Right ventricle myocardium inferior (tissue), 1 donor: ENCODE measurements at regions of chr10 and their contacts with region 1.

Region 1: GRCh38 chr10:30783939-30784500 is 154.5 kb upstream of the LYZL2 start:
- DNase-seq: peak; percentile 90
- ATAC-seq: peak; percentile 83

Region 2: GRCh38 chr10:30233186-30233959 is 550.6 kb before region 1 on chr10:
- intact Hi-C with region 1: no loop called
- DNase-seq: no peak
- ATAC-seq: no peak

Region 3: DNA sequence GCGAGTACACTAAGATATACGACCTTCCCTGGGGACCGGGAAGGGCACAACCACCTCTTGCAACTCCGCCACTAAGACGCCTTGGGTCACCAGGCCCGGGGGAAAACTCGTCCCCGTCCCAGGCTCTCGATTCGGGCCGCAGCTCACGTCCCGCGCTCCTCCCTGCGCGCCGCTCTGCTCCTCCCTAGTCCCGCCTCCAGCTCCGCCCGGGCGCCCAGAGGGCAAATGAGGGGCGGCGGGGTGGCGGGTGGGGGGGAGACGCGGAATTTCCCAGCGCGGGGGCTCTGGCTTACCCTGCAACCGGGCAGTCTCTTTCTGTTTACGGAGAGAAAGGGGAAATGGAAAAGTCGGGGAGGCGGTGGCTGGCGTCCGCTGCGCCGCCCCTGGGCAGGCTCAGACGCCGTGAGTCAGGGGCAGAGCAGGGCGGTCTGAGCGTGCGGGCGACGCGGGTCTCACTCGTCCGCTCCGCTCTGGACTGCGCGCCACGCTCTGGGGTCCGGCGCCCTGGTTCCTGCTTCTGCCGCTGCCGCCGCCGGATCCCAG is 350.2 kb before region 1 on chr10 and contains the start of gene MAP3K8:
- intact Hi-C with region 1: no loop called
- DNase-seq: peak; percentile 96
- ATAC-seq: peak; percentile 92
- total RNA-seq, gene MAP3K8: 6.7 TPM

Region 4: GRCh38 chr10:30857803-30858202 is 73.8 kb after region 1 on chr10:
- intact Hi-C with region 1: loop called (anchors 2 kb)
- DNase-seq: peak; percentile 84
- ATAC-seq: peak; percentile 96

Region 5: DNA sequence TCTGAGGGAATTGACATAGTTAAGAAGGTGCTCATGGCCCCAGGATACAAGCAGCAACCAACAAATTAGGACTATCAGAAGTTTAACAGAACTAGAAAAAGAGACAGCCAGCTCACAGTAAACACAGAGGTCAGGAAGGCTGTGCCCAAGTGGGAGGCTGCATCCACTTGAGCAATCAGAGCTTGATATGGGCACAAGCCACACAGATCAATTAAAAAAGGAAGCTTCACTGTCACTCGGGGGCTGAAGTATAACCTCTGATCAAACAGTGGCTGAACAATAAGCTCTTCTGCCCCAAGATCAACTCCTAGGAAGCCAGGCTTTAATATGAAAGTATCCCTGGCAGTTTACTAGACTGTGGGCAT is 207.6 kb after region 1 on chr10:
- intact Hi-C with region 1: loop called (anchors 5 kb)
- DNase-seq: no peak
- ATAC-seq: peak; percentile 35

Region 6: GRCh38 chr10:31133628-31134302 is 349.7 kb after region 1 on chr10:
- intact Hi-C with region 1: loop called (anchors 10 kb)
- DNase-seq: peak; percentile 93
- ATAC-seq: peak; percentile 90

Region 7: DNA sequence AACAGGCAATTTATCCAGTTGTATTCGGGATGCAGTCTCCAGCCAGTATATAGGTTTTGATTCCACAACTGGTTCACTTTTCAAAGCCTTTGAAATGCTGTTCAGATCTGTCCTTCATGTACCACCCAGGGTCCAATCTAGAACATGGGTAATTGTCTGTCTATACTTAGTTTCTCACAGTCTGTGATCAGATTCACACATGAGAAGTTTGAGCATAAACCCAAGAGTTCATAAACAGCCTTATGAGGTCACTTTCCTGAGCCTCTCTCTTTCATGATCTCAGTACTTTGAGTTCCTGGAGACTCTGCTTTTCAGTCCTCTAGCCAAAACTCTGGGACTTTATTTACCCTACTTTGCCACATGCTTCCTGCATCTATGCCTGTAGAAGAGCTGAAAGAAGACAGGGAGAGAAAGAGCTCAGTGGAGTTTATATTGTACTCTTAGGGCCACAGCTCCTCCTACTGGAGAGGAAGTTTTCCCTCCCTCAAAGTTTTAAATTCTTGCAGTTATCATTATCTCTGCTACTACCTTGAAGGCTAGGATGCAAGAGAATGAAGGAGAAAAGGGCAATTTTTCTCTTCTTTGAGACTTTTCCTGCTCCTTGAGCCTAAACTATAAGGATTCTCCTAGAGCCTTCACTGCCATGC is 707.0 kb after region 1 on chr10:
- intact Hi-C with region 1: loop called (anchors 2 kb)
- DNase-seq: no peak
- ATAC-seq: no peak

Region 8: DNA sequence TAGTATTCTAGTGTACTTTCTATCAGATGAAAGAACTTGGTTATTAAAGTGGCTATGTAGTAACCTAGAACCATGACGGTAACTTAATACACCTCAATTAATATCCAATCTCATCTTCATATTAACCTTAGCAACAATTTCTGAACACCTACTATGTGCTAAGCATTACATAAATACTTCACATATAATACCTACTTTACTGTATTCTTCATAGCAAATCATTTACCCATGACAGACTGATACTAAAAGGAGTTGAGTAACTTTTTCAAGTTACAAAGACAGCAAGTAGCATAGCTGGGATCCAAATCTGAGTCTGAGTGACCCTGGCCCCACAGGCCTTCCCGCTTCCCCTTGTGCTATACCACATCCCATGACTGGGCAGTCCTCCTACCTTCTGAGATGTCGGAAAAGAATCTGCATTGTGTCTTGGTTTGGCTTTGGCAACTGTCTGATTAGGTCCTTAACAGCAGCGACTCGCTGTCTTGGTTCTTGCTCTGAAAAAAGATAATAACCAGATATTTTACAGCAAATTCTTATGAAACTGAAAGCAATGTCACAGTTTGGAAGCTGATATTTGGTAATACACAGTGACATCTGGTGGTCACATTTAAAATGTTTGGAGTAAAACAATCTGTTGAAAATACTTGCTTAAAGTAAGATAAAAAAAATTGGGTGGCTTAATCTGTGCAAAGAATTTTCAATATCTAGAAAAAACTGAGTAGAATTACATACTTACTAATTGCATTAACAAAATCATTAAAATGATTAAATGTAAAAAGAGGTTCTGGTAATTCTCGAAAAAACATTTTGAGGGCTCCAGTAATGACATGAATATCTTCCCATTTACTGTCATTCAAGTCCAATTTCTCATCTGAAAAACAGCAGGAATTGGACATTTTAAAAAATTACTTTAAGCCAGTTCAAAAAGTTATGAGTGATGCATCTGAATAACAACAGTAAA is 1024.5 kb after region 1 on chr10:
- intact Hi-C with region 1: loop called (anchors 2 kb)
- DNase-seq: no peak
- ATAC-seq: peak; percentile 76